ENCODE measurements at regions of chr12 and their contacts with region 1.

Region 1: DNA sequence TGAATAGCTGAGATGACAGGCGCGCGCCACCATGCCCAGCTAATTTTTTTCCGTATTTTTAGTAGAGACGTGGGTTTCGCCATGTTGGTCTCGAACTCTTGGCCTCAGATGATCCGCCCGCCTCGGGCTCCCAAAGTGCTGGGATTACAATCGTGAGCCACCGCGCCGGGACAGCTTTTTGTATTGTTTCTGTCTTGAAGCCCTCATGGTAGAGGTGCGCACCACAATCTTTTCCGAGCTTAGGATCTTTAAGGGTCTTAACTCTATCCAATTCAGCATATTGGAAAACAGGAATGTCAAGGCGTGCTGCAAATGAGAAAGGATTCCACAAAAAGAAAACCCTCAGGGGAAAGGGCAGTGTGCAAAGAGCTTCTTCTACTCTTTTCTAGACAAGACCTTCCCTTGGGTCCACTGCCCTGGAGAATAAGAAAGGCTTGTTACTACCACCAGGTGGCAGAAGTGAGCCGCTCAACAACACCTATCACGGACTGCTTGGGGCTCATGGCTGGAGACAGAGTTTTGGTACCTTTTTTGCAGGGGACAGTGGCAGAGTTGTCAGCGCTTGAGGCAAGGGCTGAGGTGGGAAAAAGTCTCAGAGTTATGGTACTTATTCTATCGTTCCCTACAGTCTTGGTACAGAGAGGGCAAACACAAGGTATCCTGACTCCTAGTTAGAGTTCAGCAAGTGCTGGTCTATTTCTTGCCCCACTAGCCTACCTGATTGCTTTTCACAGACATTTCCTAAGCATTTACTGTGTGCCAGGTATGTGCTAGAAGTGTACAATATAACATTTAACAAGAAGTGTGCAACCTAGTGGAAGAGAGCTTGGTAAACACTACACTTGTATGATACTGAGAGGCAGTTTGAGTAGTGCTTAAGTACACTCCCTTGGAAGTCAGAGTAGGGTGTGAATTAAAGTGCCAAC is 16.4 kb upstream of the SP7 start:
- DNase-seq: peak; percentile 56 to 95 (median 82)

Region 2: DNA sequence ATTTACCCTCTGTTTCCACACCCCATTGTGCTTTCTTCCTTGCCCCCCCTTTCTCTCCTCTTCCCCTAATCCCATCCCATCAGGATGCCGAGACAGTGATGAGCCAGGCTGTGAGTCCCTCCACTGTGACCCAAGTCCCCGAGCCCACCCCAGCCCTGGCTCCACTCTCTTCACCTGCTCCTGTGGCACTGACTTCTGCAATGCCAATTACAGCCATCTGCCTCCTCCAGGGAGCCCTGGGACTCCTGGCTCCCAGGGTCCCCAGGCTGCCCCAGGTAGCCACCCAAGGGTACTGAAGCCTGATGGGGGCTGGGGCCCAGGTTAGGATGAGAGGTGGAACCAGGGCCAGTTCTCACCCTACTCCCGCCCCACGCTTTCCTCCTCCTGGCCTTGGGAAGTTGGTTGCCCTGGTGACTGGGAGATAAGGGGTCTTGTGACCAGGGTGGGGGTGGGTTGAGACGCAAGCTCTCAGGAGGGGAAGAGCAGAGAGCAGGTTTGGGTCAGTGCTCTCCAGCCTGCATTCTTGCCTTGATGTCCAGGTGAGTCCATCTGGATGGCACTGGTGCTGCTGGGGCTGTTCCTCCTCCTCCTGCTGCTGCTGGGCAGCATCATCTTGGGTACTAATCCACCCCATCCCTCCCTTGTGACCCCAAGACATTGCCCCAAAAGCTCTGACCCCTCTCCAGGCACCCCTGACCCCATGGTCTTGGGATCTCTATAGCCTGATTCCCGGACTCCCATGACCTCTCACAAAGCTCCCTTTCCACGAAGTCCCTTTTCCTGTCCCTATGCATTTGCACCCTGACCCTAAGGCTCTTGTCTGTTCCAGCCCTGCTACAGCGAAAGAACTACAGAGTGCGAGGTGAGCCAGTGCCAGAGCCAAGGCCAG is 72.3 kb after region 1 on chr12:
- intact Hi-C with region 1: loop called (anchors 1 kb)
- DNase-seq: no peak

Region 3: GRCh38 chr12:53508534-53509199 is 156.1 kb after region 1 on chr12:
- intact Hi-C with region 1: loop called (anchors 5 kb)
- DNase-seq: peak; percentile 79 to 97 (median 90)

Region 4: DNA sequence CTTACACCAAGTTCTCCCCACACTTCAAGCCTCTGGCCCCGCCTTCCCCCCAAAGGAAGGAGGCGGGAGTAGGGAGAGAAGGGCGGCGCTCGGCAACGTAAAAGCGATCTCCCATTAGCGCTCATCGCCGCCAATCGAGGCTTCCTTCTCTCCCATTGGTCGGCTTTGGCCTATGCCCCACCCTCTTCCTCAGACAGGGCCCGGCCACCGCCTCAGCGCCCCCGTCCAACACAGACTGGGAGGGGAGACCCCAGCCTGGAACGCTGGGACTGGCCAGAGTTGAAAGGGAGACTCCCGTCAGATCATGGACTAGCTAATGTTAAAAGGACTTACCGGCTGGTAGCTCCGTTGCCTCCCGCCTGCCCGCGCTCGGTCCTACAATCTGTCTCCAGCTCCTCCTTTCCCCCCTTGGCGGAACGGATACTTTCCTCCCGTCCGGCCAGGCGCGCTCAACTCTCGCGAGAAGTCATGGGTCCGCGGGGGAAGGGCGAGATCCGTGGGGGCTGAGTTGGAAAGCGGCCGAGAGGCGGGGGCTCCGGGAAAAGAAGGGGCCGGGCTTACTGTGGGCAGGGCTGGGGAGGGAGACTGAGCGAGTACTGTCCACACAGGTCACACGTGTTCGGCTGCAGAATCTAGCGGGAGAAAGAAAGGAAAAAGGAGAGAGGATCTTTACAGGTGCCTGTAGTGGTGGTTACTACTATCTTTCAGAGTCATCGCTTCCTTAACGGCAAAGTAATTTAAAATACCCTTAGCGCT is 273.5 kb after region 1 on chr12 and contains the start of gene ATF7:
- intact Hi-C with region 1: no loop called
- DNase-seq: peak; percentile 97 to 100 (median 98)

Measured in posterior cingulate gyrus (tissue), 11 donors.